Heart right ventricle (tissue), 16 donors: ENCODE measurements at regions of chr13 and their contacts with region 1.

Region 1: DNA sequence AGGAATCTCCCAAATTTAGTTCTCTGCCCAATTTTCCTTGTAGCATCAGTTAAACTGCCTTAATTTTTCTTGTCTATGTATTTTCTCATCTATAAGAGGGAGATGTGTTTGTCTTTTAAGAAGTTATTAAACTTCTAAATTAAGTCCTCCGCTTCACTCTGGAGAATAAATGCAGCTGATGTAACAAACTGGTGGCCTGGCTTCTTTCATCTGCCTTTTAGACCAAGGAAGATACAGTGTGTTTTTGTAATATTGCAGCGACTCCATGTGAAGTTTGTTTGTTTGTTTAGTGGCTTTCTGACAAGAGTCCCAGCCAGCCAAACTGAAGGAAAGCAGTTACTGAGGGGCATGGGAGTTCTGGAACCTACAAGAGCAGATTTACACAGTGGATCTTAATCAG is 56.4 kb downstream of the KLF12 start:
- DNase-seq: peak in 1 of 2 donors; percentile 17
- ATAC-seq: peak in 5 of 8 donors; percentile 41 to 56 (median 44)
- H3K4me3 ChIP-seq: no peak overlapping the region
- H3K27ac ChIP-seq: peak overlapping the region in 4 of 10 donors; percentile 21 to 35 (median 24)
- H3K4me1 ChIP-seq: peaks cover 5 to 72% (median 38%) of the 10 kb centered on the region in 9 donors
- H3K27me3 ChIP-seq: no peaks in the 10 kb centered on the region
- CTCF ChIP-seq: no peak

Region 2: DNA sequence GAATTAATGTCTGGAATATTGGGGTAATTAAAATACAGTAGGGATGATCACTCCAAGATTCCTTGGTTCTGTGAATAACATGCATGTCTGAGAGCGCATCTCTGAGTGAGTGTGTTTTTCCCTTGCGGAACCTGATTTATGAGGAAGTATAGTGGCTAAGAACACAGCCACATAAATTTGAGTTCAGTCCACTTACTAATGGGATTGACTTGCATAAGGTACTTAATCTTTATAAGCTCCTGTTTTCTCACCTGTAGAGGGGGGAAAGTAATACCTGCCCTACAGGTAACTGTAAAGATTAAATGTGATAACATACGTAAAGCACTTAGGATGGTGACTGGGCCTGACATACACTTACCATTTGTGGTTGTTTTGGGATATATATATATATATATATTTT is 958.2 kb before region 1 on chr13:
- intact Hi-C with region 1: no loop called
- DNase-seq: no peak
- ATAC-seq: no peak
- H3K4me3 ChIP-seq: no peak overlapping the region
- H3K27ac ChIP-seq: no peak overlapping the region
- H3K4me1 ChIP-seq: no peaks in the 10 kb centered on the region
- H3K27me3 ChIP-seq: no peaks in the 10 kb centered on the region
- CTCF ChIP-seq: no peak

Region 3: DNA sequence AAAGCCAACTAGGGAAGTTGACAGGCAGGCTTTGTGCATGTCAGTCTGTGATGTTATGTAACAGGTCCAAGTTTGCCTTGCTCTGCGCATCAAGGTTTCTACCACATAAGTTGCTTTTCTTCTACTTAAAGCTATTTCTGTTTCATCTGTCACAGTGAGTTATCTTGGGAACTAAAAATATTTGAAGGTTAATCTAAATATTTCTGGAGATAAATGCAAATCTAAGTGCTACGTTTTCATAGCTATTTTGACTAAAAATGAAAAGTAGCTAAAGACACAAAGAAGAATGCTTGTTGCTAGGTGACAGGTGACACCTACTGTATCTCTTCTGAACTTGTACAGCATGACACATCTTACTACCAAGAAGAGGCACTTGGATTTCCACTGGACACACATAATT is 79.2 kb before region 1 on chr13:
- intact Hi-C with region 1: loop called in 1 of 10 experiments (anchors 2 kb)
- DNase-seq: no peak
- ATAC-seq: no peak
- H3K4me3 ChIP-seq: no peak overlapping the region
- H3K27ac ChIP-seq: no peak overlapping the region
- H3K4me1 ChIP-seq: peaks cover 0 to 41% (median 15%) of the 10 kb centered on the region in 9 donors
- H3K27me3 ChIP-seq: no peaks in the 10 kb centered on the region
- CTCF ChIP-seq: no peak

Region 4: DNA sequence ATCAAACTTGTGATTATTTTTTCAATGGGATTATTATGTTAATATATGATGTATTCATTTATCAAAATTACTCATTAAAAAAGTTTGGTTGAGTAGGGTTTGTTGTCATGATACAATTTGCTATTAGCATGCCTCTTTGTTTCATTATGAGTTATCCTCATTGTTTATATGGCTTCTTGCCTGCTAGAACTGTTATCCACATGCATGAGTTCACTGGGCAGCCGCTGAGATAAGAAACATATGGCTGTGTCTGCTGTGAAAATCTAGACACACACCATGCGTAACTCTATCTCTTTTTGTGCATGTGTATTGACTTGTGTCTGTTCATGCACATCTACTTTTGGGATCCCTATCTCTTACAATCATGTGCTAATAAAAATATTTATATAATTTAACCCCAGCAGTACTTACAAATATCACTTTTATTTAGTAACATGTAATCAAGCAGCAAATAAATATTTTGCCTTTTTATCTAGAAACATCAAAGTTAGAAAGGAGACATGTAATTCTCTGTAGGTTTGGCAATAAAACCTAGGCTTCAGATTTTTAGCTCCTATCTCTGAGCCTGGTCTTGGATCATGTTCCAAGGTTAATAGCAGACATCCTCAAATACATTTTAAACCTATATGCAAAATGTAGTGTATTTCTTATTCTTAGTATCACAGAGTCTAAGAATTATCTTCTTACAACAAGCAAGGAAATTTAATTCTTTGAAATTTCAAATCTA is 67.6 kb after region 1 on chr13:
- intact Hi-C with region 1: no loop called
- DNase-seq: no peak
- ATAC-seq: peak in 1 of 8 donors; percentile 51
- H3K4me3 ChIP-seq: no peak overlapping the region
- H3K27ac ChIP-seq: no peak overlapping the region
- H3K4me1 ChIP-seq: peaks cover 0 to 15% (median 6%) of the 10 kb centered on the region in 9 donors
- H3K27me3 ChIP-seq: no peaks in the 10 kb centered on the region
- CTCF ChIP-seq: no peak